ENCODE measurements at regions of chr10 and their contacts with region 1.

Region 1: DNA sequence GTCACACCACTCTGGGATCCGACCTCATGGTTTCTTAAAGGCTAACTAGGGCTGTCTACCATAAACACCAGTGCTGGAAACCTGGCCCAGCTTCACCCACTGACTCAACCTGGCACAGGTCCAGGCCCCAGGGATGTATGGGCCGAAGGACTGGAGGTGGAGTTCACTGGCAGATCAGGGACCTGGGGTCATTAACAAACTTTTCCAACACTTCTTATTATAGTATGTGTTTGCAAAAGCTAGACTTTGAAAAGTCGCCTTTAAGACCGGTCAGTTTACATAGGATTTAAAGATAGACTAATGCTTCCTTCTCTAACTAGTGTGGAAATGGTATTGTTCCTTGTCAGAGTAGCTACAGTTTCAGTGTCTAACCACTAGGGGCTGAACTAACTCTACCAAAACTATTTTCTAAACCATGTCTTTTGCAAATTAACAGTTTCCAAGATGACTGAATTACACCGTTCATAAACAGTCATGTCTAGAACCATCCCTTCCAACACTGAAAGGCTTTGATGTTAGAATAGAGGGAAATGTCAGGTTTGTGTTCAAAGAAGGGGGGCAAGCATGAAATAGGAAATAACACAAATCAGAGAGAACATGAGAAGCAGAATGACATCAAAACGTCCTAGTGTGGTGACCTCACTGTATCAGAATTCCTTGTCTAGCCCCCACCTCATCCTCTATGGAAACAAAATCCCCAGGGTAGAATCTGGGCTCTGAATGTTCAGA is 29.7 kb downstream of the STN1 start:
- DNase-seq: peak; percentile 43 to 67 (median 66)
- H3K4me3 ChIP-seq: no peak overlapping the region
- H3K4me3 Mint-ChIP-seq: peak overlapping the region in 2 of 8 donors; percentile 40 to 49
- H3K27ac ChIP-seq: peak overlapping the region; percentile 11
- H3K27ac Mint-ChIP-seq: peak overlapping the region in 6 of 7 donors; percentile 36 to 85 (median 68)
- H3K4me1 ChIP-seq: peaks cover 22% of the 10 kb centered on the region
- H3K4me1 Mint-ChIP-seq: peaks cover 16 to 43% (median 29%) of the 10 kb centered on the region in 4 donors
- H3K27me3 ChIP-seq: no peaks in the 10 kb centered on the region
- H3K27me3 Mint-ChIP-seq: no peaks in the 10 kb centered on the region

Region 2: GRCh38 chr10:103592186-103593021 is 295.9 kb before region 1 on chr10:
- CTCF ChIA-PET with region 1: no interaction called
- POLR2A ChIA-PET with region 1: no interaction called
- intact Hi-C with region 1: no loop called
- DNase-seq: peak in 3 of 5 donors; percentile 11 to 32 (median 19)
- H3K4me3 ChIP-seq: no peak overlapping the region
- H3K4me3 Mint-ChIP-seq: no peak overlapping the region
- H3K27ac ChIP-seq: no peak overlapping the region
- H3K27ac Mint-ChIP-seq: peak overlapping the region in 2 of 7 donors; percentile 46 to 63
- H3K4me1 ChIP-seq: no peaks in the 10 kb centered on the region
- H3K4me1 Mint-ChIP-seq: peaks cover 0 to 1% (median 0%) of the 10 kb centered on the region in 4 donors
- H3K27me3 ChIP-seq: no peaks in the 10 kb centered on the region
- H3K27me3 Mint-ChIP-seq: no peaks in the 10 kb centered on the region

Region 3: GRCh38 chr10:103911021-103911459 is 22.8 kb after region 1 on chr10:
- CTCF ChIA-PET with region 1: interaction called, 11 read pairs
- POLR2A ChIA-PET with region 1: interaction called, 16 read pairs
- intact Hi-C with region 1: loop called (anchors 1 kb)
- DNase-seq: peak; percentile 76 to 86 (median 82)
- H3K4me3 ChIP-seq: peak overlapping the region; percentile 22 to 28
- H3K4me3 Mint-ChIP-seq: peak overlapping the region; percentile 76 to 92 (median 82)
- H3K27ac ChIP-seq: peak overlapping the region; percentile 60
- H3K27ac Mint-ChIP-seq: peak overlapping the region; percentile 92 to 99 (median 97)
- H3K4me1 ChIP-seq: peaks cover 95% of the 10 kb centered on the region
- H3K4me1 Mint-ChIP-seq: peaks cover 57 to 80% (median 67%) of the 10 kb centered on the region in 4 donors
- H3K27me3 ChIP-seq: no peaks in the 10 kb centered on the region
- H3K27me3 Mint-ChIP-seq: no peaks in the 10 kb centered on the region

Region 4: GRCh38 chr10:103951928-103952327 is 63.7 kb after region 1 on chr10:
- CTCF ChIA-PET with region 1: no interaction called
- POLR2A ChIA-PET with region 1: no interaction called
- intact Hi-C with region 1: no loop called
- DNase-seq: no peak
- H3K4me3 ChIP-seq: no peak overlapping the region
- H3K4me3 Mint-ChIP-seq: no peak overlapping the region
- H3K27ac ChIP-seq: no peak overlapping the region
- H3K27ac Mint-ChIP-seq: no peak overlapping the region
- H3K4me1 ChIP-seq: peaks cover 8% of the 10 kb centered on the region
- H3K4me1 Mint-ChIP-seq: peaks cover 5 to 12% (median 9%) of the 10 kb centered on the region in 4 donors
- H3K27me3 ChIP-seq: no peaks in the 10 kb centered on the region
- H3K27me3 Mint-ChIP-seq: peaks cover 0 to 4% of the 10 kb centered on the region in 2 donors

Region 5: DNA sequence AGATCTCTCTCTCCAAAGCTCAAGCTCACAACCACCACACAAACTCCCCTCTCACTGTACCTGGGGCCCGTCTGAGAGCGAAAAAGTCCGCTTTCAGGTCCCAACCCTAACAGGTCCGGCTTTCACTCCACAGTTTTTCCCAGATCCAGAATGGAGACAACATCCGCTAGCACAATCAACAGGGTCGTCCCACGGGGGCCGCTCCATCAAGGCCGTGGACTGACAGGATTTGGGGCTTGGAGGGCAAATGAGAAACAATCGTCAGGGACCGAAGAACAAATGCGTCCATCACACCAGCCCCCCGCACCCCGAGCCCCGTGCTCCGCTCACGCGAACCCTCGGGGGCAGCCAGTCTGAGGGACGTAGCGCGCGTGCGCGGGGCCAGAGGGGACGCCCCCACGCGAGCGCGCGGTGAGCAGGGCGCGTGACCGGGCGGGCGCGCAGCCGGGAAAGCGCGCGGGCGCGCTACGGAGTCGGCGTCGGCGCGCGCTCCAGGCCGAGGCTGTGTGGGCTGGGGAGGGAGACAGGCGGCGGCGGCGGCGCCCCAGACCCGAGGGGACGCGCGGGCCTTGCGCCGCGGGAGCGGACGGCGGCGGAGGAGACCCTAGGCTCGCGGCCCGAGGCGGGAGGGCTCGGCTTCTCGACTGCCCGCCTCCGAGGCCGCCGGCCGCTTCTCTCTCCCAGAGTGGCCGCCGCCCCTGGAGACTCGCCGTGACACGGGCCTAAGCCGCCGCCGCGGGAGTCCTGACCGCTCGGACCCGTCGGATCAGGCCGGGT is 78.6 kb after region 1 on chr10 and contains the start of gene SLK:
- CTCF ChIA-PET with region 1: interaction called, 3 read pairs
- POLR2A ChIA-PET with region 1: interaction called, 9 read pairs
- intact Hi-C with region 1: loop called (anchors 2 kb)
- DNase-seq: peak; percentile 78 to 90 (median 86)
- H3K4me3 ChIP-seq: peak within 1 kb of the TSS; percentile 59 to 99
- H3K4me3 Mint-ChIP-seq: peak within 1 kb of the TSS; percentile 94 to 100 (median 98)
- H3K27ac ChIP-seq: peak within 1 kb of the TSS; percentile 74
- H3K27ac Mint-ChIP-seq: peak within 1 kb of the TSS; percentile 95 to 98 (median 96)
- H3K4me1 ChIP-seq: peaks cover 33% of the 10 kb centered on the region
- H3K4me1 Mint-ChIP-seq: peaks cover 27 to 48% (median 36%) of the 10 kb centered on the region in 4 donors
- H3K27me3 ChIP-seq: no peaks in the 10 kb centered on the region
- H3K27me3 Mint-ChIP-seq: no peaks in the 10 kb centered on the region
- total RNA-seq, gene SLK: 30.9 to 31.1 TPM

Region 6: GRCh38 chr10:104028146-104028545 is 139.9 kb after region 1 on chr10:
- CTCF ChIA-PET with region 1: interaction called, 4 read pairs
- POLR2A ChIA-PET with region 1: no interaction called
- intact Hi-C with region 1: loop called (anchors 1 kb)
- DNase-seq: peak in 2 of 5 donors; percentile 8 to 20
- H3K4me3 ChIP-seq: no peak overlapping the region
- H3K4me3 Mint-ChIP-seq: no peak overlapping the region
- H3K27ac ChIP-seq: no peak overlapping the region
- H3K27ac Mint-ChIP-seq: peak overlapping the region in 4 of 7 donors; percentile 11 to 89 (median 44)
- H3K4me1 ChIP-seq: no peaks in the 10 kb centered on the region
- H3K4me1 Mint-ChIP-seq: peaks cover 3 to 8% (median 4%) of the 10 kb centered on the region in 4 donors
- H3K27me3 ChIP-seq: no peaks in the 10 kb centered on the region
- H3K27me3 Mint-ChIP-seq: no peaks in the 10 kb centered on the region

Region 7: GRCh38 chr10:104268716-104269645 is 380.7 kb after region 1 on chr10 and contains the start of gene GSTO2:
- CTCF ChIA-PET with region 1: interaction called, 14 read pairs
- POLR2A ChIA-PET with region 1: no interaction called
- intact Hi-C with region 1: loop called (anchors 2 kb)
- DNase-seq: peak; percentile 97 to 100 (median 99)
- H3K4me3 ChIP-seq: peak within 1 kb of the TSS; percentile 67 to 89
- H3K4me3 Mint-ChIP-seq: peak within 1 kb of the TSS; percentile 91 to 96 (median 92)
- H3K27ac ChIP-seq: peak within 1 kb of the TSS; percentile 90
- H3K27ac Mint-ChIP-seq: peak within 1 kb of the TSS; percentile 91 to 99 (median 96)
- H3K4me1 ChIP-seq: peaks cover 49% of the 10 kb centered on the region
- H3K4me1 Mint-ChIP-seq: peaks cover 28 to 56% (median 39%) of the 10 kb centered on the region in 4 donors
- H3K27me3 ChIP-seq: no peaks in the 10 kb centered on the region
- H3K27me3 Mint-ChIP-seq: no peaks in the 10 kb centered on the region
- total RNA-seq, gene GSTO2: 1.6 to 2.3 TPM